K562 (cell line): ENCODE measurements at regions of chr2 and their contacts with region 1.

Region 1: GRCh38 chr2:176126929-176127773 is 2.4 kb upstream of the HOXD8 start:
- DNase-seq: peak; percentile 59 to 76 (median 66)
- ATAC-seq: 0 out of 3 replicates have a peak, but pooled peaks have one; percentile 25
- H3K4me3 ChIP-seq: no peak overlapping the region
- H3K27ac ChIP-seq: no peak overlapping the region
- H3K4me1 ChIP-seq: peaks cover 0 to 34% of the 10 kb centered on the region in 2 experiments; a peak in 2 of 5 replicates
- H3K27me3 ChIP-seq: peaks cover 62 to 69% of the 10 kb centered on the region in 2 experiments
- CTCF ChIP-seq: peak; percentile 77 to 95 (median 83)
- EP300 ChIP-seq: no peak
- POLR2A ChIP-seq: no peak
- RAD21 ChIP-seq: peak; percentile 85

Region 2: DNA sequence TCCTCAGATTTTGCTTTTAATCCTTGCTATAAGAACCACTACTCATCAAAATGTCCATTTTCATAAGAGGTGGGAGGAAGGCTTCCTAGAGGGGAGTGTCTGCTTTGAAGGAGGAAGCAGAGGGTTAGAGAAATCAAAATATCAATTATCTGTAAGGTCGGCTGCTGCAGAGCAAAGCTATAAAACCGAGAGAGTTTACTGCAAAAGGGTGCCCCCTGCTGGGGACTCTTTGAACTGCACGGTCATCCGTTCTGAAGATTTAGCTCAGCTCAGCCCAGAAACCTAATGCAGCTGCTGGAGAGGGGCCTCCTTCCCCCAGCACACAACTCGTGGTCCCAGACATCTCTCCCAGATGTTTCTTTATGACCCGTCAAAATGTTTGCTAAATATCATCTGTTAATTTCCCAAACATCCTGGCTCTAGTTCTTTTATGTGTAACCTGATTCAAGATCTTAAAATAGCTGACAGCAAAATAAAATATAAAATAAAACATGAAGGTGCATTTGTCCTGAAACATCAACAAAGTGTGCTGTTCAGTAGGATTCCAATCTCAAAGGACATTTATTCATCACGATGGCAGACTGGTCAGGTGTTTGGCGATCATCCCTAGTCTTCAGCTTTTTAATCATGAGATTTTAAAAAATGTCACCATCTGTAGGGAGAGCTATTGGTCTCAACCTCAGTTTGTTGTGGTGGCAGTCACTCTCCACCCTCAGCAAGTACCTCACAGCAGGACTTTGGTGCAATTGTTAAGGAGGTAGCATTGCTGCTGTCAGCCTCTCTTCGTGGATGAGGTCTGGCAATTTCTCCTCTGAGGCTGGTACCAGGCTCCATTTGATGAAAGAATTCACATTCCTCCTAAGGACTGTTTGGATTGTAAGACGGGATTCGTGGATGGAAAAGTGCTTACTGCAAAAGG is 328.0 kb after region 1 on chr2:
- CTCF ChIA-PET with region 1: no interaction called
- POLR2A ChIA-PET with region 1: interaction called, 4 read pairs
- in situ Hi-C with region 1: no loop called
- intact Hi-C with region 1: loop called (anchors 1 kb)
- DNase-seq: peak; percentile 65 to 77 (median 75)
- ATAC-seq: peak; percentile 92
- H3K4me3 ChIP-seq: no peak overlapping the region
- H3K27ac ChIP-seq: no peak overlapping the region
- H3K4me1 ChIP-seq: no peaks in the 10 kb centered on the region
- H3K27me3 ChIP-seq: peaks cover 0 to 3% of the 10 kb centered on the region in 2 experiments; a peak in 2 of 5 replicates
- CTCF ChIP-seq: peak; percentile 83 to 90 (median 88)
- EP300 ChIP-seq: no peak
- POLR2A ChIP-seq: no peak
- RAD21 ChIP-seq: peak; percentile 75 to 84

Region 3: GRCh38 chr2:176638167-176639015 is 511.2 kb after region 1 on chr2:
- CTCF ChIA-PET with region 1: interaction called, 17 read pairs
- POLR2A ChIA-PET with region 1: no interaction called
- in situ Hi-C with region 1: loop called (anchors 5 kb)
- intact Hi-C with region 1: no loop called
- DNase-seq: peak; percentile 59 to 78 (median 63)
- ATAC-seq: peak; percentile 98
- H3K4me3 ChIP-seq: no peak overlapping the region
- H3K27ac ChIP-seq: no peak overlapping the region
- H3K4me1 ChIP-seq: peaks cover 0 to 9% of the 10 kb centered on the region in 2 experiments; a peak in 2 of 5 replicates
- H3K27me3 ChIP-seq: peaks cover 14 to 16% of the 10 kb centered on the region in 2 experiments
- CTCF ChIP-seq: peak; percentile 71 to 85 (median 82)
- EP300 ChIP-seq: no peak
- POLR2A ChIP-seq: no peak
- RAD21 ChIP-seq: peak; percentile 82 to 83

Region 4: GRCh38 chr2:176814306-176815052 is 687.3 kb after region 1 on chr2:
- CTCF ChIA-PET with region 1: interaction called, 18 read pairs
- POLR2A ChIA-PET with region 1: no interaction called
- in situ Hi-C with region 1: loop called (anchors 25 kb)
- intact Hi-C with region 1: loop called (anchors 5 kb)
- DNase-seq: peak; percentile 34 to 48 (median 44)
- ATAC-seq: peak; percentile 66; the same call in 2 of the 3 replicates
- H3K4me3 ChIP-seq: no peak overlapping the region
- H3K27ac ChIP-seq: no peak overlapping the region
- H3K4me1 ChIP-seq: no peaks in the 10 kb centered on the region
- H3K27me3 ChIP-seq: peaks cover under 1 to 11% of the 10 kb centered on the region in 2 experiments; a peak in 3 of 5 replicates
- CTCF ChIP-seq: peak; percentile 49 to 82 (median 62); a peak in 4 of 6 replicates
- EP300 ChIP-seq: no peak
- POLR2A ChIP-seq: no peak
- RAD21 ChIP-seq: peak; percentile 71 to 78

Region 5: GRCh38 chr2:177153805-177154204 is 1026.7 kb after region 1 on chr2:
- CTCF ChIA-PET with region 1: interaction called, 5 read pairs
- POLR2A ChIA-PET with region 1: no interaction called
- in situ Hi-C with region 1: loop called (anchors 5 kb)
- intact Hi-C with region 1: no loop called
- DNase-seq: no peak
- ATAC-seq: no peak
- H3K4me3 ChIP-seq: no peak overlapping the region
- H3K27ac ChIP-seq: no peak overlapping the region
- H3K4me1 ChIP-seq: no peaks in the 10 kb centered on the region
- H3K27me3 ChIP-seq: peaks cover under 1 to 2% of the 10 kb centered on the region in 2 experiments; a peak in 3 of 5 replicates
- CTCF ChIP-seq: no peak
- EP300 ChIP-seq: no peak
- POLR2A ChIP-seq: no peak
- RAD21 ChIP-seq: no peak

Region 6: GRCh38 chr2:177254433-177255226 is 1127.5 kb after region 1 on chr2:
- CTCF ChIA-PET with region 1: no interaction called
- POLR2A ChIA-PET with region 1: no interaction called
- in situ Hi-C with region 1: no loop called
- intact Hi-C with region 1: no loop called
- DNase-seq: peak; percentile 69 to 93 (median 73)
- ATAC-seq: peak; percentile 81
- H3K4me3 ChIP-seq: 0 out of 2 replicates have a peak overlapping the region, but pooled peaks have one; percentile 4
- H3K27ac ChIP-seq: peak overlapping the region; percentile 59
- H3K4me1 ChIP-seq: peaks cover 35 to 79% of the 10 kb centered on the region in 2 experiments
- H3K27me3 ChIP-seq: no peaks in the 10 kb centered on the region
- CTCF ChIP-seq: peak; percentile 88 to 98 (median 96)
- EP300 ChIP-seq: no peak
- POLR2A ChIP-seq: no peak
- RAD21 ChIP-seq: peak; percentile 62 to 81